RWPE1 (cell line): ENCODE measurements at regions of chr1 and their contacts with region 1.

Region 1: GRCh38 chr1:168386949-168387586 is 106.4 kb downstream of the TBX19 start:
- DNase-seq: peak; percentile 72
- H3K27ac ChIP-seq: no peak overlapping the region
- CTCF ChIP-seq: no peak

Region 2: DNA sequence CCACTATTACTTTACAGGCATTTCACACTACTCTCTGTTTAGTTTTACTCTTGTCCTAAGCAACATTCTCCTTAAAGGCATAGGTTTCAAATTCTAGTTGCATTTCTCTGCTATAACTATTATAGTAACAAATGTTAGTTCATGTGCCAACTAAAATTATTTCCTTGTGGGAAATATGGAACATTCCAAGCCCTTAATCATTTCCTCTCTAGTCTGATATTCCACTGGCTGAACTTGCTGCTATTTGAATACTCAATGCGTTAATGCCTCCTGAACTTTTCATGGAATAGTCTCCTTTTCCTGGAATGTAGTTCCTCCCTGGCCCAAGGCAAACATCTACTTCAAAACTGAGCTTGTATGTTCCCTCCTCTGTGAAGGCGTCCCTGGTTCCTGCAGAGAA is 125.7 kb before region 1 on chr1:
- CTCF ChIA-PET with region 1: no interaction called
- POLR2A ChIA-PET with region 1: no interaction called
- DNase-seq: peak; percentile 68
- H3K27ac ChIP-seq: no peak overlapping the region; the same call in 1 of the 2 replicates
- CTCF ChIP-seq: no peak

Region 3: GRCh38 chr1:168341483-168341975 is 45.5 kb before region 1 on chr1:
- CTCF ChIA-PET with region 1: no interaction called
- POLR2A ChIA-PET with region 1: no interaction called
- DNase-seq: no peak
- H3K27ac ChIP-seq: no peak overlapping the region
- CTCF ChIP-seq: no peak

Region 4: DNA sequence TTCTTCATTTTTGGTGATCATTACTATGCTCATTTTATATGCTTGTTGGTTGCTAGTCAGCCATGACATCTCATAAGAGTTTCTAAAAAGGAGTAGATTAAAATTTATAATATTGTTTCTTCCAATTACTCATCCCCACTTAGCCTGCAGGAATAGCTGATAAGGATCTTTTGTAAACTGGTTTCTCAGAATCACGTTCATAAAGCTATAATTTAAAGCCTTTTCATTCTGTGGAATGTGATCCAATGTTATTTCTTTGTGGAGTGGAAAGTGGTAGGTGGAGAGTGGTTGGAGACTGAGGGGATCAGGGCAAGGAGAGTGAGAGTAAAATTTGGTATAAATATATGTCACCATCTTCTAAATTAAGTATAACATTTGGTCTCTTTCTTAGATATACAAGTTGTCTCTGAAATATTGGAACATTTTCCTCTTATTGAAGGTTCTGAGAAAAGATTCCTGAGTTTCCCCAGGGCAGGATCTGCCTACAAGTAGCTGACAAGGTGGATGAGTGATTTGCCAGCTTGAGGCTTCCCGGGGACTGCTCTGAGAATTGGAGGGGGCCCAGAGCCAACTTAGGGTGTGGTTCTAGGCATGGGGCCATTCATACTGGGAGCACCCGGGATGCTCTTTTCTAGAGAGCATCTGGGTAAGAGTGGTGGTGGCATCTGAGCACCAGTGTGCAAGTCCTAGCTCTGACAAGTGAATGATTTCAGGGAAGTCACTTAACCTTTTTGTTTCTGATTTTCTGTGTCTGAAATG is 10.1 kb after region 1 on chr1:
- CTCF ChIA-PET with region 1: no interaction called
- POLR2A ChIA-PET with region 1: interaction called, 11 read pairs
- DNase-seq: no peak
- H3K27ac ChIP-seq: no peak overlapping the region
- CTCF ChIP-seq: no peak